ENCODE measurements at regions of chr2 and their contacts with region 1.

Region 1: DNA sequence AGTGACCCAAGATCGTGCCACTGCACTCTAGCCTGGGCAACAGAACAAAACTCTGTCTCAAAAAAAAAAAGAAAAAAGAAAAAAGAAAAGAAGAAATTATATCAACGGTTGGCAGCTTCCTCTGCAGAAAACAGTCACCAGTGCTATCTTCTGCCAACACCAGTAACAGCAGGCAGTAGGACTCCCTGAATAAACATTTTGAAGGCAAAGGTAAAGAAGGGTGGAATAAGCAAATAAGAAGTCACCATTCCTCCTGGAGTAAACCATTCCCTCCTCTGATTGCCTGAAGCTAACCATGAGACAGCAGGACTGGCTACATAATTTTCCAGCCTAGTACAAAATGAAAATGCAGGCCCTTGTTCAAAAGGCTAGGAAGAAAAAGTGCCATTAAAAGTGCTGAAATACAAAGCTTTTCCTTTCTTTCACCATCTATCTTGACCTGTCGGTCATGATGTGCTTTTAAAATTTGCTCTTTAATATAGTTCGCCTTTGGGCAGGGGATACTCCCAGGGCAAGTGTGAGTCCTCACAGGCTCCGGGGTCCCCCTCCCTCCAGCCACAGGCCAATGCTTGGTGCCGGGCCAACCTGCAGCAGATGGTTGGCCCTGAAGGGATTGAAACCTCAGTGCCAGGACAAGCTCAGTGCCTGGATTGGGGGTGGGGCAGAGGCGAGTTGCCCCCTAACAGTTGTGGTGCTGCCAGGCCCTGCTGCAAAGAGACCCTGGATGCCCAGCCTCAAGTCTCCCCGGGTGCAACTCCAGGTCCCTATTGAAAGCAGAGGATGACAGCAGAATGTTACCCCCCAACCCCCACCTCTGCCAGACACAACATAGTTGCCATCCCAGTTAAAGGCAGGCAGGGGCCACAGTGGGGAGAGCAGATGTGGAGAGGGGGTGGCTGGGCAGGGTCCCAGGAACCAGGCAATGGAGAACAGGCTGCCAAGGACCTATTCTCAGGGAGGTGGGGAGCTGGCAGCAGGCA is 9.3 kb upstream of the RNF103 start:
- DNase-seq: peak; percentile 29 to 31
- ATAC-seq: peak; percentile 49 to 91 (median 77)
- H3K4me3 ChIP-seq: no peak overlapping the region
- H3K27ac ChIP-seq: peak overlapping the region in 5 of 10 donors; percentile 5 to 37 (median 23)
- H3K4me1 ChIP-seq: peaks cover 0 to 28% (median 0%) of the 10 kb centered on the region in 9 donors
- H3K27me3 ChIP-seq: no peaks in the 10 kb centered on the region
- CTCF ChIP-seq: no peak

Region 2: DNA sequence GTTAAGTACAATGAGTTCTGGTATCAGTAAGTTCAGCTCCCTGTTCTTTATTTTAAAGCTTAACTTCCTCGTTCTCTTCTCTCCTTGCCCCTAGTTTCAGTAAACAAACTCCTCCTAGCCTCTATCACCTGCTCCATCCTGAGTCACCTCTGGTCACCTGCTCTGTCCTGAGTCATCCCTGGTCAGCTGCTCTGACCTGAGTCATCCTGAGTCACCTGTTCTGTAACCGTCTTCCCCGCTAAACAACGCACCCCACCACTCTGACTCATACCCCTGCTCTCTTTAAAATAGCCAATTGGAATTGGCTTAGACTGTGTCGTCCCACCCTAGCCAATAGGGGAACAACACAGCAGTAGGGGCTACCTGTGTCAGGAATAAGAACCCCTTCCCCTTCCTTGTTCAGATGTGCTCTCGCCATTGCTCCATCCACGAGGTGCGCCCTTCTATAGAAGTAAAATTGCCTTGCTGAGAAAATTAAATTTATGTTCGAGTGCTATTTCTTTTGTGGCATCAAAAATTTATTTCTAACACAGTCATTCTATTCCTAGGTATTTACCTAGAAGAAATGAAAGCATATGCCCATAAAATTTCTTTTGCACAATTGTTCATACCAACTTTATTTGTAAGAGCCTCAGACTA is 62.2 kb after region 1 on chr2:
- intact Hi-C with region 1: loop called in 2 of 10 experiments (anchors 10 kb)
- DNase-seq: no peak
- ATAC-seq: no peak
- H3K4me3 ChIP-seq: no peak overlapping the region
- H3K27ac ChIP-seq: no peak overlapping the region
- H3K4me1 ChIP-seq: peaks cover 0 to 6% (median 0%) of the 10 kb centered on the region in 9 donors
- H3K27me3 ChIP-seq: no peaks in the 10 kb centered on the region
- CTCF ChIP-seq: no peak